ENCODE measurements at regions of chr11 and their contacts with region 1.

Region 1: DNA sequence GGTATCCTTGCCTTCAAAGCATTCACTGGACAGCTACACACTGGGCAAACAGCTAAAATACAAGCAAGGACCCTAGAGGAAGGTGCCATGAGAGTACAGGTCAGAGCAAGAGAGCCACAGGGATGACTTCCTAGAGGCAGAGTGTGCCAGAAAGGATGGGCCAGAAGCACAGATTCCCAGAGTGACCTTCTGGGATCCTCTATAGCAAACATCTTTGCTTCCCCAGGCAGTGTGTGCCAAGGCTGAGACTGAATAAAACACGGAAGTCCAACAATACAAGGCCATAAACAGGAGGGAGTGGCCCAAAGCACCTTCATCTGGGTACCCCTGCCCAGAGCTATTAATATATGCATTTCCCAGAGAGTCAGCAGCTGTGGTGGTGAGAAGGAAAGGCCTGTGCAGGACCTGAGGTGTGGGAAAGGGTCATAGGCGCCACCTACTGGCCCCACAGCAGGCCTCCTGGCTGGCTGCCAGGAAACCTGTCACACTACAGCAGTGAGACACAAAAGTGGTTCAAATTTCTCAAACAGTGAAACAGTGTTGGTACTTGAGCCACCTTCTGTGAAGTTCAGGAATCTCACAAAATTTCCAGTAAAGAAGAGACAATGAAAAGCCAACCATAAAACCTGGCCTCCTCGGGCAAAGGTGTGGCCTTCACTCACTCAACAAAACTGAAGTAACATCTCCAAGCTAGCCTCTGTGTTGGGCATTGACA is 20.3 kb downstream of the CLPB start:
- DNase-seq: peak; percentile 66
- H3K4me3 Mint-ChIP-seq: no peak overlapping the region
- H3K27ac Mint-ChIP-seq: no peak overlapping the region
- H3K4me1 Mint-ChIP-seq: peaks cover 29% of the 10 kb centered on the region
- H3K27me3 Mint-ChIP-seq: no peaks in the 10 kb centered on the region

Region 2: GRCh38 chr11:72293910-72294615 is 120.0 kb before region 1 on chr11:
- intact Hi-C with region 1: loop called (anchors 1 kb)
- DNase-seq: no peak
- H3K4me3 Mint-ChIP-seq: no peak overlapping the region
- H3K27ac Mint-ChIP-seq: no peak overlapping the region
- H3K4me1 Mint-ChIP-seq: no peaks in the 10 kb centered on the region
- H3K27me3 Mint-ChIP-seq: no peaks in the 10 kb centered on the region

Region 3: GRCh38 chr11:72333661-72334060 is 80.4 kb before region 1 on chr11:
- intact Hi-C with region 1: loop called (anchors 5 kb)
- DNase-seq: peak; percentile 66
- H3K4me3 Mint-ChIP-seq: no peak overlapping the region
- H3K27ac Mint-ChIP-seq: peak overlapping the region; percentile 31
- H3K4me1 Mint-ChIP-seq: peaks cover 39% of the 10 kb centered on the region
- H3K27me3 Mint-ChIP-seq: no peaks in the 10 kb centered on the region